ENCODE measurements at regions of chr6 and their contacts with region 1.

Region 1: DNA sequence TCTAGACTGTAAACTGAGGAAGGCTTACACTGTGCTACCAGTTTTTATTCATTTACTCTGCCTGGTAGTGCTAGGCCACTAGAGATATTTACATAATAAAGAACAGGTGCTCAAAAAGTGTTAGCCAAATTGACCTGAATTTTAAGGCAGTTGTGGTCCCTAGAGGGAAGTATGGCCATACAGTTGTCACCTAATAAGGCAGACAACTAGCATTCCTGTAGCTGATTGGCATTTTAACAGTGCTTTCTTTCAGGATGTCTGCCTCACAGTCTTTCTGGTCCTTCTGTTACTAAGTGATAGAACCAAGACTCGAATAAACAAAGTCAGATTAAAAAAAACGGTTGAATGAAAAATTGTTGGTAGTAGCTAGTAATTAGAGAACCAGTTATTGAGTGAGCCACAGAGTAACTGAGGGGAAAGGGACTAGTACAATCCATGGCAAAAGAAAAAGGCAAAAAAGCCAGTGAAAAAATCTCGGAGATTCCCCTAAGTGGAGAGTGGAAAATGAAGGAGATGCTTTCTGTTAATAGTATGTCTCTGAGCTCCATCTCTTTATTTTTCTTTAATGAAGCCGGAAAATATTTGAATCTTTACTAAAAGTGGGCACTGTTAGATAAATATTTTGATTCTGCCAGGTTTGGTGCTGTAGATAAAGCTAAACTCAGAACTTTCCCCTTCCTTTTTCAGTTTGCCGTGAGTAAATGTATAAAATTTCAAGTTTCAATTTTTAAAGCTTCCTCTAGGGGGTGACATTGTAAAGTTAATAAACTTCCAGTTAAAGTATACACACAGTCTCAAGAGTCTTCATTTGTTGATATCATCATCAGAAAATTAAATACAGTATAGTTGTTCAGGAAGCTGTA is 9.1 kb downstream of the VTA1 start:
- DNase-seq: peak in 1 of 2 experiments; percentile 10
- H3K4me3 ChIP-seq: peak overlapping the region in 1 of 4 experiments; percentile 20; a peak in 1 of 8 replicates
- H3K27ac ChIP-seq: no peak overlapping the region
- H3K4me1 ChIP-seq: peaks cover 0 to 6% (median 1%) of the 10 kb centered on the region in 4 experiments; a peak in 3 of 7 replicates
- H3K27me3 ChIP-seq: no peaks in the 10 kb centered on the region
- CTCF ChIP-seq: peak in 2 of 3 experiments; percentile 16 to 20; a peak in 2 of 4 replicates
- EP300 ChIP-seq: no peak
- POLR2A ChIP-seq: no peak
- RAD21 ChIP-seq: peak in 1 of 2 experiments; percentile 28; a peak in 3 of 4 replicates

Region 2: GRCh38 chr6:142167486-142167885 is 11.4 kb after region 1 on chr6:
- CTCF ChIA-PET with region 1: interaction called, 47 read pairs
- POLR2A ChIA-PET with region 1: no interaction called
- DNase-seq: no peak
- H3K4me3 ChIP-seq: no peak overlapping the region
- H3K27ac ChIP-seq: no peak overlapping the region
- H3K4me1 ChIP-seq: no peaks in the 10 kb centered on the region
- H3K27me3 ChIP-seq: no peaks in the 10 kb centered on the region
- CTCF ChIP-seq: no peak
- EP300 ChIP-seq: no peak
- POLR2A ChIP-seq: no peak
- RAD21 ChIP-seq: no peak

Region 3: GRCh38 chr6:142187209-142187608 is 31.1 kb after region 1 on chr6:
- CTCF ChIA-PET with region 1: interaction called, 16 read pairs
- POLR2A ChIA-PET with region 1: no interaction called
- DNase-seq: no peak
- H3K4me3 ChIP-seq: no peak overlapping the region
- H3K27ac ChIP-seq: no peak overlapping the region
- H3K4me1 ChIP-seq: no peaks in the 10 kb centered on the region
- H3K27me3 ChIP-seq: no peaks in the 10 kb centered on the region
- CTCF ChIP-seq: no peak
- EP300 ChIP-seq: no peak
- POLR2A ChIP-seq: no peak
- RAD21 ChIP-seq: no peak

Region 4: DNA sequence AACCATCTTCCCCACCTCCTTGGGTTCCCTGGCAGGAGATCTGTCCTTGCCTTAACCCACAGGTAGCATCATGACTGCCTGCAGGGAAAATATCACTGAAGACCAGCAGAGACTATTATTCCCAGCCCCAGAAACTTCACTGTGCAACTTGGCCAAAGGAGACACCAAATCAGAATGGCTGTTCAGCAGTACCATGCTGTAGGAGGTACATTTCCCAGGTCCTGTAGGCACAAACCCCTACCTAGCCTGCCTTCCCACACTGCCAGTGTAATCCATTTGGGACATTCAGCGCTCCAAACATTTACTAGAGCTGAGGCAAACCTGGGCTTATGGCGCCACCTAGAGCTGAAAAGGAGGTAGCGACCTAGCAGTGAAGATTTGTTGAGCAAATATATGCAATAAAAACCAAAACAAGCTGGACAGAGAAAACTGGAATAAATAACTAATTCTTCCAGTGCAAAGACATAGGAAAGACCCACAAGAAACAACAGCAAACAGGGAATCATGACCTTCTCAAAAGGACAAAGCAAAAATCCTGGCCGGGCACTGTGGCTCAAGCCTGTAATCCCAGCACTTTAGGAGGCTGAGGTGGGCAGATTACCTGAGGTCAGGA is 51.2 kb after region 1 on chr6:
- CTCF ChIA-PET with region 1: interaction called, 13 read pairs
- POLR2A ChIA-PET with region 1: no interaction called
- DNase-seq: peak; percentile 21 to 63
- H3K4me3 ChIP-seq: no peak overlapping the region
- H3K27ac ChIP-seq: no peak overlapping the region
- H3K4me1 ChIP-seq: no peaks in the 10 kb centered on the region
- H3K27me3 ChIP-seq: no peaks in the 10 kb centered on the region
- CTCF ChIP-seq: peak; percentile 48 to 89 (median 77)
- EP300 ChIP-seq: no peak
- POLR2A ChIP-seq: no peak
- RAD21 ChIP-seq: peak; percentile 91 to 92

Region 5: GRCh38 chr6:142387997-142388815 is 232.1 kb after region 1 on chr6:
- CTCF ChIA-PET with region 1: interaction called, 14 read pairs
- POLR2A ChIA-PET with region 1: no interaction called
- DNase-seq: no peak
- H3K4me3 ChIP-seq: no peak overlapping the region
- H3K27ac ChIP-seq: no peak overlapping the region
- H3K4me1 ChIP-seq: no peaks in the 10 kb centered on the region
- H3K27me3 ChIP-seq: no peaks in the 10 kb centered on the region
- CTCF ChIP-seq: peak in 2 of 3 experiments; percentile 32 to 59; a peak in 2 of 4 replicates
- EP300 ChIP-seq: no peak
- POLR2A ChIP-seq: no peak
- RAD21 ChIP-seq: peak; percentile 62 to 66